ENCODE measurements at regions of chr17 and their contacts with region 1.

Region 1: DNA sequence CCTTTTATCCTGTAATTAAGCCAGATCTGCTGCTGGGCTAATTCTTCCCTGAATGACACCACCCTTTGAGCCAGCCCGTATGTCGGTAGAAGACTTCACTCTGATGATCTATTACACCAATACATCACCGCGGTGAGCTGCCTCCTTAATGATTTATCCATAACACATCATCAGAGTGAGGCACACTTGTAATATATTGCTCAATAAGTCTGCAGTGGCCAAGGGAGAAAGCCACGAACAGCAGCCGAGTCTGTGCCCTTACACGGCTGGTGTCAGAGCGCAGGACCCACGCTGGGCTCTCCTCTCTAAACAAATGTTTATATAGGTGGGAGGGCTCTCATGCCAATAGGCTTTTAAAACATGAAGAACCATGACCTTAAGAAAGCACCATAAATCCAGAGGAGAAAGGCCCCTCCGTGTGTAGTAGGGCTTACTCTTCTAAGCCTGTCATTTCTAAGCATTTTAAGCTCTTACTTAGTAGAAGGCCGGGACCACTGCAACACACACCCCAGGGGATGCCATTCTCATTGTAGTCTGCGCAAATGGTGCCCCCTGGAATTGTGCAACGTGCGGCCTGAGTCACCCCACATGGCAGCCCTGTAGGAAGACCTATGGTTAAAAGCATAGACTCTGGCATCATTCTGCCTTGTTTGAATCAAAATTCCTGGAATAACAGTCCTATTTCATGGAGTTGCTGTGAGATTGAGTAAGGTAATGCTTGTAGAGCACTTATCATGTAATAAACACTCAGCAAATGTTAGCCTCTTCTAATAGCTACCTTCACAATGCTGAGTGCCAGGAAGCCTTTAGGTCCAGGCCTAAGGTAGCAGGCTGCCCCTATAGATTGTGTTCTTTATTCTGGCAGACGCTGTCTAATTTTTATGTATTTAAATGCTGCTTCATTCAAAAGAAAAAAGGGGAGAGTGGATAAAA is 26.1 kb downstream of the MRPS23 start:
- DNase-seq: no peak
- ATAC-seq: no peak
- H3K4me3 ChIP-seq: no peak overlapping the region
- H3K27ac ChIP-seq: no peak overlapping the region
- H3K4me1 ChIP-seq: no peaks in the 10 kb centered on the region
- H3K27me3 ChIP-seq: no peaks in the 10 kb centered on the region
- CTCF ChIP-seq: no peak

Region 2: GRCh38 chr17:57504208-57504607 is 319.5 kb before region 1 on chr17:
- CTCF ChIA-PET with region 1: interaction called, 10 read pairs
- POLR2A ChIA-PET with region 1: no interaction called
- in situ Hi-C with region 1: no loop called
- intact Hi-C with region 1: no loop called
- DNase-seq: no peak
- ATAC-seq: no peak
- H3K4me3 ChIP-seq: no peak overlapping the region
- H3K27ac ChIP-seq: no peak overlapping the region
- H3K4me1 ChIP-seq: no peaks in the 10 kb centered on the region
- H3K27me3 ChIP-seq: no peaks in the 10 kb centered on the region
- CTCF ChIP-seq: no peak

Region 3: GRCh38 chr17:57773557-57773956 is 50.2 kb before region 1 on chr17:
- CTCF ChIA-PET with region 1: interaction called, 10 read pairs
- POLR2A ChIA-PET with region 1: no interaction called
- in situ Hi-C with region 1: no loop called
- intact Hi-C with region 1: no loop called
- DNase-seq: no peak
- ATAC-seq: no peak
- H3K4me3 ChIP-seq: no peak overlapping the region
- H3K27ac ChIP-seq: no peak overlapping the region
- H3K4me1 ChIP-seq: no peaks in the 10 kb centered on the region
- H3K27me3 ChIP-seq: peaks cover 50% of the 10 kb centered on the region
- CTCF ChIP-seq: no peak

Measured in Panc1 (cell line).